A673 (cell line): ENCODE measurements at regions of chr3 and their contacts with region 1.

Region 1: DNA sequence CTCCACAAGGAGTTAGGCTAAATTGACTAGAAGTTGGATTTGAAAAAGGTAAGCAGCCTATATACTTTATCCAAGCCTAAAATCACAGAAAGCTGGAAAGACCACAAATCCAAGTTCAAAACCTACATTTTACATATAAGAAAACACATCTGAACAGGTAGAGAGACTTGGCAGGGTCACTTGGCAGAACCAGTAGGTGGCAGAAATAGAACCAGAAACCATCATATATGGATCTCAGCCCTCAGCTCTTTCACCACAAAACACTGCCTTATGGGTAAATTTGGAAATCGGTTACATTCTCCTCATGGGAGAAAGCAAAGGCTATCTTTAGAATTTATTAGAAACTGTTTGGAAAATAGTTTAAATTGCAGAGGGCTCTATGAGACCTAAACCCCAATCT is 44.2 kb downstream of the MKRN2 start:
- DNase-seq: no peak
- H3K4me3 ChIP-seq: no peak overlapping the region
- H3K27ac ChIP-seq: no peak overlapping the region
- H3K4me1 ChIP-seq: no peaks in the 10 kb centered on the region
- H3K27me3 ChIP-seq: no peaks in the 10 kb centered on the region
- CTCF ChIP-seq: no peak

Region 2: GRCh38 chr3:12588039-12589009 is 12.7 kb before region 1 on chr3:
- CTCF ChIA-PET with region 1: no interaction called
- POLR2A ChIA-PET with region 1: interaction called, 20 read pairs
- intact Hi-C with region 1: no loop called
- DNase-seq: no peak
- H3K4me3 ChIP-seq: no peak overlapping the region
- H3K27ac ChIP-seq: no peak overlapping the region
- H3K4me1 ChIP-seq: no peaks in the 10 kb centered on the region
- H3K27me3 ChIP-seq: no peaks in the 10 kb centered on the region
- CTCF ChIP-seq: no peak